ENCODE measurements at regions of chr11 and their contacts with region 1.

Region 1: GRCh38 chr11:17528181-17528691 is 16.0 kb downstream of the USH1C start:
- H3K4me3 ChIP-seq: no peak overlapping the region
- H3K27ac ChIP-seq: no peak overlapping the region
- H3K4me1 ChIP-seq: no peaks in the 10 kb centered on the region
- CTCF ChIP-seq: peak; percentile 48; the same call in 1 of the 2 replicates

Region 2: GRCh38 chr11:17354601-17354991 is 173.6 kb before region 1 on chr11:
- CTCF ChIA-PET with region 1: interaction called, 18 read pairs
- POLR2A ChIA-PET with region 1: no interaction called
- H3K4me3 ChIP-seq: no peak overlapping the region
- H3K27ac ChIP-seq: no peak overlapping the region
- H3K4me1 ChIP-seq: no peaks in the 10 kb centered on the region
- CTCF ChIP-seq: peak; percentile 29; the same call in 1 of the 2 replicates

Region 3: DNA sequence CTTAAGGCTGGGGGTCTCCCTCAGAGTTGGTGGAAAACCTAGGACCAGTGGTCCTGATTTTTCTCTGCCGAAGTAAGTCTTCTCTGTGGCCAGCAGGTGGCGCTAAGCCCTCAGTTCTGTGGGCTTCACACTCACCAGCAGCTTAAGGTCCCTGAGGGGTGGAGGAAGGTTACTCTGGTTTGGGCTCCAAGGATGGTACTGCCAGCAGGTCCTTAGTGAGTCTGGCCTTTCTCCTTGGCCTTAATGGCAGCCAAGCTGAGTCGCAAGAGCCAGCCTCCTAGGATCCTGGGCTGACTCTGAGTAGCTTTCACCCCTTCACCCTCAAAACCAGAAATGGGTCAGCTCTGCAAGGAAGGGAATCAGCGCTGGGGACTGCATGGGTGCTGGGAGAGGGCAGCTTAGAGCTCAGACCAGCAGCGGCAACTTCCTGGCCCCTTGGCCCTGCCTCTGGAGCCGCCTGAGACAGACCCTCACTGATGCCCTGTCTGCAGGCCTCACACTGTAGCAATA is 144.2 kb before region 1 on chr11:
- CTCF ChIA-PET with region 1: interaction called, 192 read pairs
- POLR2A ChIA-PET with region 1: interaction called, 6 read pairs
- H3K4me3 ChIP-seq: no peak overlapping the region
- H3K27ac ChIP-seq: no peak overlapping the region
- H3K4me1 ChIP-seq: no peaks in the 10 kb centered on the region
- CTCF ChIP-seq: peak; percentile 79

Region 4: GRCh38 chr11:17504330-17505107 is 23.7 kb before region 1 on chr11:
- CTCF ChIA-PET with region 1: interaction called, 70 read pairs
- POLR2A ChIA-PET with region 1: no interaction called
- H3K4me3 ChIP-seq: no peak overlapping the region
- H3K27ac ChIP-seq: no peak overlapping the region
- H3K4me1 ChIP-seq: no peaks in the 10 kb centered on the region
- CTCF ChIP-seq: peak; percentile 72

Region 5: DNA sequence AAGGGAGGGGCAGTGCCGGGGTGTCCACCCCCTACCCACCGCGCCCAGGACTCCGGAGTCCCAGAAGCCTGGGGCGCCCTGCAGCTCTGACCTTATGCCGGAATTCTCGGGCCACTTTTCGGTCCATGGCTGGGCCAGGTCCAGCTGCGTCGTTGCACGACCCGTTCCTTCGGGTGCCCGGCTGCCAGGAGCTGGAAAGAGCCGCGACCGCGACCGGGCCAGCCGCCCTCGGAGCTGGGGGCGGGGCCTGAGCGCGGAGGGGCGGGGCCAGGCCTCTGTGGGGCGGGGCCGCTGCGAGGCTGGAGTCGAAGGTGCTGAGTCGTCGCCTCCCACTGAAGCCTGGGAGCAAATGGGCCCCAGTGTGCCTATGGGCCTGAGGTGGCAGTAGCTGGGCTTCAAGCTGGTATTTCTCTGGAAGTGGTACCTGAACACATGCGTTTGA is 16.0 kb after region 1 on chr11 and contains the start of gene USH1C:
- CTCF ChIA-PET with region 1: interaction called, 19 read pairs
- POLR2A ChIA-PET with region 1: no interaction called
- H3K4me3 ChIP-seq: no peak within 1 kb of the TSS
- H3K27ac ChIP-seq: no peak within 1 kb of the TSS
- H3K4me1 ChIP-seq: no peaks in the 10 kb centered on the region
- CTCF ChIP-seq: no peak